ENCODE measurements at regions of chr16 and their contacts with region 1.

Region 1: GRCh38 chr16:22297114-22297878 is at the start of gene POLR3E:
- DNase-seq: peak; percentile 95

Region 2: DNA sequence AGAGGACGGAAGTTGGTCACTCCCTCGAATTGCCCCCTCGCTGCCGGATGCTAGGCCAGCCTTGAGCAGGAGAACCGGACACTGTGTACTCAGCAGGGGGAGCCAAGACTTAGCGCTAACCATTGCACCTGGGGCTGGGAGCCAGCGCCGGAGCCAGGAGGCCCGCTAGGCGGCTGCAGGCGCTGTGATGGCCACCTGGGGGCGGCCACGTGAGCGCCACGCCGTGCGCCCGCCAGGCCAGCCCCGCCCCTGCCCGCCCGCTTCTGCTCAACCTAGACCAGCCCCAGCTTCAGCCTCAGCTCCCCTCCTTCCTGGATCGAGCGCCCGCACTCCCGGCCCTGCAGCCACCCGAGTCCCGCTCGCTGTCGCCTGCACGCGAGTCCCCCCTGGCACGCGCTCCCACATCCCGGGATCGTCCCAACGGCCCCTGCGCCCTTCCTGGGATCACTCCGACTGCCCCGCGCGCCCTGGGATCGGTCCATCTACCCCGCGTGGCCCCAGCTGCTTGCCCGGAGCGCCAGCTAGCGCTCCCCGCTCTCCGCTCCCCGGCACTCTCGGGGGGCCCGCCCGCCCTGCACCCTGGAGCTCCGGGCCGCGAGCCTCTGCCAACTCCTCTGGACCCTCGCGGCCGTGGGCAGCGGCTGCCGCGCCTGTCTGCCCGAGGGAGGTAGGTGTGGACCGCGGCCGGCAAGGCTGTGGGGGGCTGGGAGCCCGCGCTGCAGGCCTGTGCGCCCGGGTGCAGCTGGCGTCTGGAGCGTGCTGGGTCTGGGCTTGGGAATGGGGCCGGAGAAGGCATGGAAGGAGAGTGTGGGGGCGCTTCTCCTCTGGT is 91.1 kb before region 1 on chr16 and contains the start of gene EEF2K:
- CTCF ChIA-PET with region 1: interaction called, 3 read pairs
- POLR2A ChIA-PET with region 1: interaction called, 17 read pairs
- DNase-seq: peak; percentile 93

Measured in HEK293T (cell line).